Activated CD4-positive, alpha-beta T cell treated with anti-CD3 and anti-CD28 coated beads, Interleukin-2, amount 10 ng/mL, durations not matched to agents 24 days and 14 days (primary cell): ENCODE measurements at regions of chr2 and their contacts with region 1.

Region 1: GRCh38 chr2:233854241-233854981 is at the start of gene HJURP:
- DNase-seq: peak; percentile 99
- H3K4me3 Mint-ChIP-seq: peak within 1 kb of the TSS; percentile 99
- H3K27ac Mint-ChIP-seq: peak within 1 kb of the TSS; percentile 96
- H3K4me1 Mint-ChIP-seq: peaks cover 49% of the 10 kb centered on the region
- H3K27me3 Mint-ChIP-seq: peaks cover 2% of the 10 kb centered on the region
- total RNA-seq, gene HJURP: 41.5 and 45.6 TPM in 2 replicates

Region 2: GRCh38 chr2:233556756-233557736 is 297.4 kb before region 1 on chr2:
- intact Hi-C with region 1: loop called (anchors 10 kb)
- DNase-seq: no peak
- H3K4me3 Mint-ChIP-seq: peak overlapping the region; percentile 1
- H3K27ac Mint-ChIP-seq: peak overlapping the region; percentile 12
- H3K4me1 Mint-ChIP-seq: peaks cover 8% of the 10 kb centered on the region
- H3K27me3 Mint-ChIP-seq: no peaks in the 10 kb centered on the region

Region 3: DNA sequence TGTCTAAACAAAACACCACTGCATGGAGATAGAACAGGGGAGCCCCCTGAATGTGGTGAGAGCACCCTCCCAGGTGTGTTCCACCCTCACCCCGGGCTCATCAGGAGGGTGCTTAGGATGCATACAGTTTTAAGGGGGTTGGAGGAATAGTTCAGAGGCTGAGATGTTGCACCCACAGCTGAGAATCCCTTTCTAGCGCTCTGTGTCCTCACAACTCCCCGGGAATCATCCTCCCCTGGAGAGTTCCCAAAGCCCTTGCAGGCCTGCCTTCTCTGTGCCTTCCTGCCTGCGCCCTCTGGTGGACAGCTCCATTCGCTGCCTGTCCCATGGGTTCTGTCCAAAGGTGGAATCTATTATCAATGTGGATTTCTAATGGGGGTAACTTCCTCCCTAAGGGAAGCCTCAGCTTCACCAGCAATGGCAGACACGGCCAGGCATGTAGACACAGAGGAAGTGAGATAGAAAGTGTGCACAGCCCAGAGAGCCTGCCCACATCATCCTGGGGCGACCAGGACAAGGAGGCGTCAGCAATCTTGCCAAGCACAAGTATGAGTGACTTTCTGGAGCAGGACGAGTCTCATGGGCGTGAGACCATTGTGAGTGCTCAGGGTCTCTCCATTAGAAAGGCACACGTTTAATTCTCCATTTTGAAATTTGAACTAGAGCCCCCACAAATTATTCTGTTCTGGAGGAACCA is 143.0 kb before region 1 on chr2:
- intact Hi-C with region 1: no loop called
- DNase-seq: peak; percentile 89
- H3K4me3 Mint-ChIP-seq: no peak overlapping the region
- H3K27ac Mint-ChIP-seq: no peak overlapping the region
- H3K4me1 Mint-ChIP-seq: no peaks in the 10 kb centered on the region
- H3K27me3 Mint-ChIP-seq: peaks cover 24% of the 10 kb centered on the region

Region 4: DNA sequence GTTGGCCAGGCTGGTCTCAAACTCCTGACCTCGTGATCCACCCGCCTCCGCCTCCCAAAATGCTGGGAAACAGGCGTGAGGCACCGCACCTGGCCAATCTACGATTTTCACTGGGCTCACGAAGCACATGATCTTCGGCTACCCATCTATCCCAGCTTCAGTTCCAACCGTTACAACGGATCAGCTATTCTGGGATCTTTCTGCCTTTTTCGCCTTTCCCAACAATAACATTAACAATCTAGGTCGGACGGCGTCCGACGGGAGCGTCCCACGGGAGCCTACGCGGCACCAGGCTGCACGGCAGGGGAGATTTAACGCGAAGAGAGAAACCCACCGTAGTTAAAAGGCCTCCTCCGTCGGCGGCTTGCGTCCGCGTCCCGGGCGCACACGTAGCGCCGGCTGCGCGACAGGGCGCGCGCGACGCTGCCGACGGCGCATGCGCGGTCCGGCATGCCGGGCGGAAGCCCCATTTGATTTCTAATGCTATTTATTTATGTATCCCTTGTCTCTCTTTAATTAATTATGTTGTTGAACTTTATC is 13.7 kb after region 1 on chr2 and contains the start of gene MSL3B:
- intact Hi-C with region 1: loop called (anchors 1 kb)
- DNase-seq: peak; percentile 90
- H3K4me3 Mint-ChIP-seq: peak within 1 kb of the TSS; percentile 86
- H3K27ac Mint-ChIP-seq: peak within 1 kb of the TSS; percentile 87
- H3K4me1 Mint-ChIP-seq: peaks cover 17% of the 10 kb centered on the region
- H3K27me3 Mint-ChIP-seq: peaks cover 27% of the 10 kb centered on the region

Region 5: DNA sequence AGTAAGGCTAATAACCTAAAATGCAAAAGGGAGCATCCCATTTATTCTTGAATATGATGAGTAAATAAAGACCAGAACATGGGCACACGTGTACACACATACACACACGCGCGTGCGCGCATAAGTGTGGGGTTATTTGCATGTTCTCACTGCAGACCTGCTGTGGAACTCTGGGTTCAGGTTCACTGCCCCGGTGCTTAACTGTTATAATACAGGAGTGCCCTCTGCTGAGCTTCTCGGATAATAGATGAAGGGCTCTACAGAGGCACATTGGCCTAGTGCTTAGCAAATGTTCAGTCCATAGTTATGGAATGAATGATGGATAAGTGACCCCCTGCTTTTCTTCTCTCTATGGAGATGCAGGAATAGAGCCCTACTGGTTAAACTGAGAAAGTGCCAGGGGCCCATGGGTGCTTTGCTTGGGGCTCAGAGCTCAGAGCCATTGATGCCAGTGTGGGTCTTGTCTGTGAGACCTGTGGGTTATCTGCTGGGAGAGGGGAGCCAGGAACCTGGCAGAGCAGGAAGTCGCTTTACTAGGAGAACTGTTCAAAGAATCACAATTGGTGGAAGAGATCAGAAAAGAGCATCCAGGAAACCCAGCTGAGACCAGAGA is 646.1 kb after region 1 on chr2:
- intact Hi-C with region 1: loop called (anchors 2 kb)
- DNase-seq: peak; percentile 92
- H3K4me3 Mint-ChIP-seq: no peak overlapping the region
- H3K27ac Mint-ChIP-seq: peak overlapping the region; percentile 9
- H3K4me1 Mint-ChIP-seq: peaks cover 29% of the 10 kb centered on the region
- H3K27me3 Mint-ChIP-seq: peaks cover 23% of the 10 kb centered on the region